T-cell (primary cell): ENCODE measurements at regions of chr9 and their contacts with region 1.

Region 1: DNA sequence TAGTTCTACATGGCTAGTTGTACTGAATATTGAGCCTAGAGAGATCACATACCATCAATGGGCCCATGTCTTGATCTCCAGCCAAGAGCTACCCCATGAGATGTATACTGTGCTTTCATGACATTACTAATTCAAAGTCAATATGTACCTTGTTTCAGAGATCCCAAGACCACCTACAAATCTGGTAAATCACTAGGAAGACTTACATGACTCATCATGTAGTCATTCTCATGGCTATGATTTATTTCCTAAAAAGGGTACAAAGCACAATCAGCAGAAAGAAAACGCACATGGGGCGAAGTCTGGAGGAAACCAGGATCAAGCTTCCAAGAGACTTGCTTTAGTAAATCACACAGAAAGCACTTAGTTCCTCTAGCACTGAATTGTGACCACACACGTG is 103.0 kb downstream of the PCSK5 start:
- DNase-seq: no peak
- ATAC-seq: no peak
- H3K4me3 ChIP-seq: no peak overlapping the region
- H3K4me3 Mint-ChIP-seq: no peak overlapping the region
- H3K27ac ChIP-seq: no peak overlapping the region
- H3K27ac Mint-ChIP-seq: no peak overlapping the region
- H3K4me1 ChIP-seq: no peaks in the 10 kb centered on the region
- H3K4me1 Mint-ChIP-seq: peaks cover 22 to 42% (median 36%) of the 10 kb centered on the region in 3 donors
- H3K27me3 ChIP-seq: no peaks in the 10 kb centered on the region
- H3K27me3 Mint-ChIP-seq: no peaks in the 10 kb centered on the region

Region 2: GRCh38 chr9:75964427-75964826 is 29.0 kb before region 1 on chr9:
- CTCF ChIA-PET with region 1: interaction called in 1 of 2 experiments, 3 read pairs
- POLR2A ChIA-PET with region 1: interaction called in 1 of 2 experiments, 10 read pairs
- DNase-seq: no peak
- ATAC-seq: no peak
- H3K4me3 ChIP-seq: no peak overlapping the region
- H3K4me3 Mint-ChIP-seq: no peak overlapping the region
- H3K27ac ChIP-seq: no peak overlapping the region
- H3K27ac Mint-ChIP-seq: no peak overlapping the region
- H3K4me1 ChIP-seq: peaks cover 11 to 14% of the 10 kb centered on the region in 2 experiments
- H3K4me1 Mint-ChIP-seq: peaks cover 23 to 47% (median 43%) of the 10 kb centered on the region in 3 donors
- H3K27me3 ChIP-seq: no peaks in the 10 kb centered on the region
- H3K27me3 Mint-ChIP-seq: no peaks in the 10 kb centered on the region